ENCODE measurements at regions of chr16 and their contacts with region 1.

Region 1: GRCh38 chr16:58119509-58119845 is 9.7 kb downstream of the CFAP20 start:
- H3K4me3 ChIP-seq: no peak overlapping the region
- H3K27ac ChIP-seq: no peak overlapping the region
- H3K4me1 ChIP-seq: peaks cover 20% of the 10 kb centered on the region
- CTCF ChIP-seq: no peak

Region 2: DNA sequence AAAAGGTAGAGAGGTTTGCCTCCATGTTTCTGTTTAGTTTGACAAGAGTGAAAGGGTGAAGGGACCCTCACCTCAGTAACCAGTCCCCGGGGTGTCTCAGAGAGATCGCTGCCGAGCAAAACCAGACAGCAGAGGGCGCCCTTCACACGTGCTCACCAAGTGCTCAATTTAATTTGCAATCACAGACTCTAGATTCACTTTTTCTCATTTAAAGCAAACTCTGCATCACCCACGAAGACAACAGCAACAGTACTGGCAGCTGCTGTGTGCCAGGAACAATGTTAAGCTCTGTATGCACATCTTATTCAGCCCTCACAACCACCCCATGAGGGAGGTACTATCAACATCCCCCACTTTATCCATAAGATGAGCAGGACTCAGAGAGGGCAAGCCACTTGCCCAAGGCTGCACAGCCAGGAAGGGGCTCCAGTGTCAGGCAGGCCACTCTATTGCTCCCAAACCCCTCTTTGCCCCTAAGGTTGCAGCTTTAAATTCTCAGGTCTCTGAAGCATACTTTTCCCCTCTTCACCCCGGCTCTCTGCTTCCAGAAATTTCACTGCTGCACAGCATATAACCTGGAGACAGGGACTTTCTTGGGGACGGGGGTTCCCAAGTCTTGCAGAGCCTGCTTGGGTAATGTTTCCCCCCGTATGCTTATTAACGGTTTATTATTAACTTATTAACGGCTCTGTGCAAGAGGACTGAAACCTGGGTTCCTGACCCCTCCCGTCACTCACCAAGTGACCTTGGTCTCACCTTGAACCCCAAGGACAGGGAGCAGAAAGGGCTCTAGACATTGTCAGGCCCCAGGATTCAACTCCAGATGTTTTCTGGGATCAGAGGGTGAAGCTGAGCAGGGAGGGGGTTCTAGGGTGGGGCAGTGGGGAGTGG is 219.5 kb before region 1 on chr16:
- CTCF ChIA-PET with region 1: interaction called, 13 read pairs
- POLR2A ChIA-PET with region 1: no interaction called
- H3K4me3 ChIP-seq: no peak overlapping the region
- H3K27ac ChIP-seq: no peak overlapping the region
- H3K4me1 ChIP-seq: no peaks in the 10 kb centered on the region
- CTCF ChIP-seq: peak; percentile 80

Region 3: GRCh38 chr16:58011652-58012051 is 107.8 kb before region 1 on chr16:
- CTCF ChIA-PET with region 1: interaction called, 19 read pairs
- POLR2A ChIA-PET with region 1: no interaction called
- H3K4me3 ChIP-seq: no peak overlapping the region
- H3K27ac ChIP-seq: no peak overlapping the region
- H3K4me1 ChIP-seq: no peaks in the 10 kb centered on the region
- CTCF ChIP-seq: no peak

Region 4: GRCh38 chr16:58025351-58026138 is 93.9 kb before region 1 on chr16 and contains the start of gene MMP15:
- CTCF ChIA-PET with region 1: interaction called, 41 read pairs
- POLR2A ChIA-PET with region 1: interaction called, 11 read pairs
- H3K4me3 ChIP-seq: peak within 1 kb of the TSS; percentile 63
- H3K27ac ChIP-seq: peak within 1 kb of the TSS; percentile 68; the same call in 1 of the 2 replicates
- H3K4me1 ChIP-seq: peaks cover 16% of the 10 kb centered on the region
- CTCF ChIP-seq: peak; percentile 14; the same call in 1 of the 2 replicates

Region 5: GRCh38 chr16:58098207-58099096 is 21.0 kb before region 1 on chr16:
- CTCF ChIA-PET with region 1: interaction called, 35 read pairs
- POLR2A ChIA-PET with region 1: interaction called, 3 read pairs
- H3K4me3 ChIP-seq: no peak overlapping the region
- H3K27ac ChIP-seq: no peak overlapping the region
- H3K4me1 ChIP-seq: no peaks in the 10 kb centered on the region
- CTCF ChIP-seq: no peak